ENCODE measurements at regions of chr15 and their contacts with region 1.

Region 1: DNA sequence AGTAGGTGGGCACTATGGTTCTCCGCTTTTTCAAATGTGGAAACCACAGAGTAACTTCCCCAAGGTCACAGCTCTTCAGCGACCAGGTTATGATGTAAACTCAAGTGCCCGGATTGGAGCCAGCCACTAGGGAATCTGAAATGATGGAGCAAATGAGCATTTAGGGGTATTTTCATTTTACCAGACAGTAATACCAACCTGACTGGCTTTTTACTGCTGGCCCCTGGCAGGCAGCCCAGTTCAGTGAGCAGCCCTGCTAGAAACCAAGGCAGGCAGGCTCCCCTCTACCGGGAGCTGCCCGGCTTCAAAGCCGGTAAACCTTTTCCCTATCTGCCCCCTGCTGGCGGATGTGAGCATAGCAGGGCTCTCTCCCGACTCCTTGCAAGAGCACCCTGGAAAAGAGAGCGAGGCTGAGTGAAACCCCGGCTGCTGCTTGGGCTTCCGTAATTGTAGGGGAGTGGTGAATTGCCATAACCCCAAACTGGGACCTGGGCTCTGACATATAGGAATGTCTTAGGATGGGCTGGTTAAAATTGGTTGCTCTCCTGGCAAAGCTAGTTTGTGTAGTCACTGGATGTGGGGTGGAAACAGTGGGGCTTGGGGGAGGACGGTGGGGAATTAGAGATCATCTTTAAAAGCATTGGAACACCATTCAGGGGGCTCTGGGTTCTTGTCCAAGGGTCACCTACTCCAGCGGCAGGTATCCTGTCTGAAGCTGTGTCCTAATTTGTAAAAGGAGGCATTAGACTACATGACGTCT is 98.0 kb upstream of the TNFAIP8L3 start:
- DNase-seq: peak; percentile 91
- H3K4me3 Mint-ChIP-seq: no peak overlapping the region
- H3K27ac Mint-ChIP-seq: no peak overlapping the region
- H3K4me1 Mint-ChIP-seq: no peaks in the 10 kb centered on the region
- H3K27me3 Mint-ChIP-seq: peaks cover 21% of the 10 kb centered on the region

Region 2: DNA sequence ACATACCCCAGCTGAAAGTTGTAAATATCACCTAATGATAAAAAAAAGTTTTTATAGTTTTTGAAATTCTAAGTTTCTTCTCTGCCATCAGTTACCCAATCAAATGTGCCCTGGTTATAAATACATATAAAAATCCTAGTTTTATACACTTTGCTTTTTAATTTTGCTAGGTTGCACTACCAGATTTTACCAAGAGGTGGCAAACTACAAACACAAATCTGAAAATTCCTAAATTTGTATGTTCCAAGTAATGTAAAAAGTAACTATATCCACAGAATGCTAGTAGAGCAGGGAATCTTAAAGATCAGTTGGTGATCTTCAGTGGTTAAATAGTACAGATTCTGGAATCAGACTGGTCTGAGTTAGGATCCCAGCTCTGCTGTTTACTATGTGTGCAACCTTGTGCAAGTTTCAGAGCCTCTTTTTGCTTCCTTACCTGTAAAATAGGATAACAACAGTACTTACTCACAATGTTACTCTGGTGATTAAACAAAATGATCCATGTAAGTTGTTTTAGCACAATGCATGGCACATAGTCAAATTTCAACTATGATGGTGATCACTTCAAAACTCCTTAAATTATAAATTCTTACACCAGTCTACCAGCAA is 517.1 kb before region 1 on chr15:
- CTCF ChIA-PET with region 1: no interaction called
- intact Hi-C with region 1: loop called (anchors 5 kb)
- DNase-seq: no peak
- H3K4me3 Mint-ChIP-seq: no peak overlapping the region
- H3K27ac Mint-ChIP-seq: no peak overlapping the region
- H3K4me1 Mint-ChIP-seq: peaks cover 31% of the 10 kb centered on the region
- H3K27me3 Mint-ChIP-seq: no peaks in the 10 kb centered on the region

Region 3: GRCh38 chr15:50939911-50940310 is 252.8 kb before region 1 on chr15:
- CTCF ChIA-PET with region 1: no interaction called
- intact Hi-C with region 1: loop called (anchors 10 kb)
- DNase-seq: no peak
- H3K4me3 Mint-ChIP-seq: no peak overlapping the region
- H3K27ac Mint-ChIP-seq: no peak overlapping the region
- H3K4me1 Mint-ChIP-seq: no peaks in the 10 kb centered on the region
- H3K27me3 Mint-ChIP-seq: no peaks in the 10 kb centered on the region

Region 4: DNA sequence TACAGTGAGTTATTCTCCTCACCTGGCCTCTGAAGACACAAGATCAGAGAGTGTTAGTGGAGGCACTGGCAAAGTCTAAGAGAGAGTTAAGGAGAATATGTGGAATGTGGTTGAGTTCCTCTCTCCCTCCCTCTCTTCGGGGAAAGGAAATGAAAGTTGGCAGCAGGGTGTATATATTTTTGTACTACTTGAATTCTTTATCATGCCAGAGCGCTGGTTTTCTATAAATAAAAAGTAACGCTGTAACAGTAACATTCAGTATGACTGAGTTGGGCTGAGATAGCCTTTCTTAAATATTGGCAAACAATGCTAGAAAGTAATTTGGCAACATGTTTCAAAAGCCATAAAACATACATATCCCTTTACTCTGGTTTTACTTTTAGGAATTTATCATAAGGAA is 20.5 kb before region 1 on chr15:
- CTCF ChIA-PET with region 1: interaction called, 16 read pairs
- intact Hi-C with region 1: no loop called
- DNase-seq: no peak
- H3K4me3 Mint-ChIP-seq: no peak overlapping the region
- H3K27ac Mint-ChIP-seq: no peak overlapping the region
- H3K4me1 Mint-ChIP-seq: no peaks in the 10 kb centered on the region
- H3K27me3 Mint-ChIP-seq: peaks cover 18% of the 10 kb centered on the region

Region 5: DNA sequence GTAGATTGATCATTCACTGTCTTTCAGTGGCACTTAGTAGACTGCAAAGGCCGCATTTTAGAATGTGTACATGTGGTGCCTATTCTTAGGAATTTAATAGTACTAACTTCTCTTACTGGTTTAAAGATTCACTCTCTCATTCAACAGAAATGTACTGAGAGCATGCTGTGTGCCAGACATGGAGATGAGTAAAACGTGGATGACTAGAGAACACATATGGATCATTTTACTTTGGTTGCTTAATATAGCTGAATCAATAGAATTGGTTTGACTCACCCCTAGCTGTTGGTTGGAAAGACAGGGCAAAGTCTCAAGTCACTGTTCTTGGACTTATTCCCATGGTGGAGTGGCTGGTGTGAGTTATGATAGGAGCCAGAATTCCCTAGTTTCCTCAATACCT is 11.1 kb after region 1 on chr15:
- CTCF ChIA-PET with region 1: interaction called, 10 read pairs
- intact Hi-C with region 1: no loop called
- DNase-seq: no peak
- H3K4me3 Mint-ChIP-seq: no peak overlapping the region
- H3K27ac Mint-ChIP-seq: no peak overlapping the region
- H3K4me1 Mint-ChIP-seq: no peaks in the 10 kb centered on the region
- H3K27me3 Mint-ChIP-seq: peaks cover 6% of the 10 kb centered on the region